Heart left ventricle (tissue), 16 donors: ENCODE measurements at regions of chr3 and their contacts with region 1.

Region 1: GRCh38 chr3:141452036-141452435 is 34.8 kb upstream of the RASA2 start:
- DNase-seq: no peak
- ATAC-seq: peak; percentile 67 to 78 (median 72)
- H3K4me3 ChIP-seq: no peak overlapping the region
- H3K27ac ChIP-seq: peak overlapping the region in 5 of 12 donors; percentile 17 to 66 (median 19)
- H3K4me1 ChIP-seq: peaks cover 0 to 60% (median 29%) of the 10 kb centered on the region in 12 donors
- H3K27me3 ChIP-seq: no peaks in the 10 kb centered on the region
- CTCF ChIP-seq: peak; percentile 55 to 89 (median 76)
- POLR2A ChIP-seq: no peak

Region 2: GRCh38 chr3:141231101-141231935 is 220.7 kb before region 1 on chr3 and contains the start of gene PXYLP1:
- intact Hi-C with region 1: loop called in 4 of 10 experiments (anchors 10 kb)
- DNase-seq: peak; percentile 94 to 98 (median 95)
- ATAC-seq: peak; percentile 94 to 97 (median 96)
- H3K4me3 ChIP-seq: peak within 1 kb of the TSS; percentile 71 to 95 (median 87)
- H3K27ac ChIP-seq: peak within 1 kb of the TSS; percentile 45 to 96 (median 90)
- H3K4me1 ChIP-seq: peaks cover 0 to 40% (median 14%) of the 10 kb centered on the region in 12 donors
- H3K27me3 ChIP-seq: no peaks in the 10 kb centered on the region
- CTCF ChIP-seq: peak; percentile 43 to 94 (median 78)
- POLR2A ChIP-seq: peak in 1 of 2 donors; percentile 81
- total RNA-seq, gene PXYLP1: 15.1 to 30.6 (median 21.2) TPM

Region 3: DNA sequence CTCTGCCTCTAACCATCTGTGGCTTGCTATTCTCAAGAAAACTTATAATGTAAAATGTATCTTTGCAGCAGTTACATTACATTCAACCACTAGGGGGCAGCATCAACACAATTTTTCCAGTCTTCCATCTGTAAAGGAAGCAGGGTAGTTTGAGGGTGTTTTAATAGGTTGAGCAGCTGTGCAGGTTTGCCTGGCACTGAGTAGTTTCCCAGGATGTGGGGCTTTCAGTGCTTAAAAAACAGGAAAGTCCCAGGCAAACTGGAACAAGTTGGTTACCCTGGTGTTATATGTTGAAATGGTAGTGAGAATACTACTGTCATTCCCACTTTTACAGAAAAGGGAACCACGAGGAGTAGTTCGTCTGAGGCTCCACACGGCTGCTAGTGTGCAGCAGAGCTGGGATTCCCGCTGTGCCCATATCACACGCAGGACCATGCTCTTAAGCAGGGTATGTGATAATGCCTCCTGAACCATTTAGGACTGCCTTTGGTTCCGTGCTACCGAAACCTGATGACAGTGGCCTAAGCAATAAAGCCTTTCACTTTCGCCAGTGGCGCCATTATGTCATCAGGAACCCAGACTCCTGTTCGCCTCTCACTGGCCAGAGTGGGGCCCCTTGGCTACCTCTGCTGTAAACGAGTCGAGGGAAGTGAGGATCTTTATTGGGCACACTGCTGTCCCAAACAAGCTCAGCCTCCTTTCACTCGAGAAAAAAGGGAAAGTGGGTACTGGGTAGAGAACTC is 148.4 kb before region 1 on chr3:
- intact Hi-C with region 1: loop called in 2 of 10 experiments (anchors 2 kb)
- DNase-seq: peak in 2 of 5 donors; percentile 48 to 58
- ATAC-seq: peak; percentile 59 to 76 (median 68)
- H3K4me3 ChIP-seq: no peak overlapping the region
- H3K27ac ChIP-seq: peak overlapping the region in 2 of 12 donors; percentile 4 to 13
- H3K4me1 ChIP-seq: peaks cover 0 to 25% (median 3%) of the 10 kb centered on the region in 12 donors
- H3K27me3 ChIP-seq: no peaks in the 10 kb centered on the region
- CTCF ChIP-seq: peak; percentile 71 to 97 (median 82)
- POLR2A ChIP-seq: no peak

Region 4: DNA sequence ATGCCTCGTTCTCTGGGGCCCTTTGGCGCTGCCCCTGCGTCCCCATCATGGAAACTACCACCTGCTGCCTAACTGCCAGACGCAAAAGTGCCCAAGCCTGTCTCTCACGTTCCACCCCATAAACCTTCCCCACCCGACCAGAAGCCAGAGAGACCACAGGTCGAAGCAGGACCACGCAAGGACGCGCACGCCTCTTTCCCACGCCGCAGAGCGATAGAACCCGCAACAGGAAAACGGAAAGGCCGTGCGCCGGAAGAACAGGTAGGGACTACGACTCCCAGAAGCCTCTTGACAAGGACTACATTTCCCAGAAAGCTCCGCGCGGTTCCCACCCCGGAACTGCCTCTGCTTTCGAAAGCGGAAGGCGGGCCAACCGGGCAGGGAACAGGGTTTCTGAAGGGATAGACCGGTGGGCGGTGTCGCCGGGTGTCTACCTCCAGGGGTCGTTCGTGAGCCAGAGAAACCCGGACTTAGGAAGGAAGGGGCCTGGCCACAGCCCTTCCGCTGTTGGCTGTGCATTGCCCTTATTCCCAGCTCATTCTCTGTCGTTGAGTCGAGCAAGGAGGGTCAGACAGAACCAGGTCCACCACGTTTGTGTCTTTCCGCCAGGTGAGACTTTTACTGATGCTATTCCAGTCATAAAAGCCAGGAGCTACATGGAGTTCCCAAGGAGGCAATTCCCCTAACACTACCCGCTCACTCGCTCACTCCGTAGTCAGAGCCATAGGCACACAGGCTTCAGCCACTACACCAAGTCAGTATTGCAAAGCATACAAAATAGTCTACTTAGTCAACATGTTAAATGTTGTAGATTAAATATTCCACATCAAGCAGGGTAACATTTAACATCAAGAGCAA is 140.3 kb before region 1 on chr3:
- intact Hi-C with region 1: loop called in 9 of 10 experiments (anchors 2 to 5 kb)
- DNase-seq: peak; percentile 98 to 99 (median 99)
- ATAC-seq: peak; percentile 97 to 99 (median 98)
- H3K4me3 ChIP-seq: peak overlapping the region; percentile 28 to 85 (median 70)
- H3K27ac ChIP-seq: peak overlapping the region; percentile 1 to 90 (median 80)
- H3K4me1 ChIP-seq: peaks cover 0 to 29% (median 11%) of the 10 kb centered on the region in 12 donors
- H3K27me3 ChIP-seq: no peaks in the 10 kb centered on the region
- CTCF ChIP-seq: peak; percentile 69 to 92 (median 84)
- POLR2A ChIP-seq: peak in 1 of 2 donors; percentile 74

Region 5: DNA sequence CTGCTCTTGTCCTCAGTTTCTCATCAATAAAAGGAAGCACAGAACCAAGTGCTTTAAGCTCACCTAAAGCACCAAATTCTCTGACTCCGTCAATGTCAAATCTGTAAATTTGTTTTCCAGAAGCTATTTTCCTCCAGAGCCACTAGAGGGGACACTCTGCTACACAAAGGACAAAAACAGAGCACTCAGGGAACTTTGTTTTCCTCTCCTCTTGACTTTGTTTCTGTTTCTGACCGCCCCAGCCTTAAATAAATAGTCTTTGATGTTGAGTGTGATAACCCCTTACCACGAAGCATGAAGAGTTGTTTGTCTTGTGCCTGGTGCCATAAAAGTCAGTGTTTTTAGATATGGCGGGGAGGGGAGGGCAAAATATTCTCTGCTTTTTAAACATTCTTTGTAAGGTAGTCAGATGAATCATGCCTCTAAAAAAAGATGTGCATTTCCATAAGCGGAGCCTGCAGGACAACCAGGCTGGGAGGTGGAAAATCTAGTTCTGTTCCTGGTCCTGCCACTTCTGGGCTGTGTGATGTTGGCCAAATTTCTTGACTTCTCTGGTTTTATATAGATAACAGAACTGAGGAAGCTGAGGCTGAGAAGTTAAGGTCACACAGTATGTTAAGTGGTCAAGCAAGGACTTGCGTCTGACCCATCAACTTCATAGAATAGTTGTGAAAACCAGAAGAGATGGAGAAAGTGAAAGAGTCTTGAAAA is 91.0 kb before region 1 on chr3:
- intact Hi-C with region 1: loop called in 9 of 10 experiments (anchors 1 to 2 kb)
- DNase-seq: peak in 1 of 5 donors; percentile 23
- ATAC-seq: peak; percentile 72 to 88 (median 82)
- H3K4me3 ChIP-seq: peak overlapping the region in 6 of 12 donors; percentile 6 to 33 (median 26)
- H3K27ac ChIP-seq: peak overlapping the region in 10 of 12 donors; percentile 10 to 60 (median 44)
- H3K4me1 ChIP-seq: peaks cover 0 to 12% (median 4%) of the 10 kb centered on the region in 12 donors
- H3K27me3 ChIP-seq: no peaks in the 10 kb centered on the region
- CTCF ChIP-seq: peak; percentile 63 to 92 (median 84)
- POLR2A ChIP-seq: no peak

Region 6: DNA sequence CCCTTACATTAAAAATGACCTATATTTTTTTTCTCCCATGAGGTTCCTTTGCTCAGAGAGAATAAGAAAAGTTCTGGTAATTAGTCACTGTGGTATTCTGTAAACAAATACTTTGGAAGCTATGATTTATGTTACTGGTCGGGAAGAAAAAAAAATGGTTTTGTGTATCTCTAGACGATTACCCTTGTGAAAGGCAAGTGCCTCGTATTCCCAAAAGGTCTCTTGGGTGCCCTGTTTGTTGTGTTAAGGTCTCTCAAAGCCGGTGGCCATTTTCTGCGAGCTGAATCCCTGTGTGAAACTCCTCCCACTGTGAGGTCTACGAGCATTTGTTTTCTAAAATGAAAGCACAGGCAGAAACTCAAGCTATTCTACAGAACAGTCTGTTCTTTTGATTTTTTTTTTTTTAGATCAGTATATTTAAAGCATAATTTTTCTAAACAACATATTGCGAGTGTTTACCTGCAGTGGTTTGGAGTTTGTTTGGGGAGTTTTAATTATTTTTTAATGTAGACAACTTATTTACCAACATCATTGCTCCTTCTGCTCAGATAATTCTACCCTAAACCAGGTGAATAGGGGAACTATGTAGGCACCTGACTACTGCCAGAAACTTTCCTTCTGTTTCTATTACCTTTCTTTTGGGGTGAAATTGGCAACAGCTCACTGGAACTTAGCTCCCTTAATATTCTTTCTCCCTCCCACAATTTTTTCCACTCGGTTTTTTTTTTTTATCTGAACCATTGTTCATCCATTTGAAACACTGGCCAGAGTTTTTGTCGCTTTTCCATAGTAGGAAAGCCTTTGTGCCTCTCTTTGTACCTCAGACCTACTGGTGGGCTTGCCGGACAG is 39.7 kb before region 1 on chr3:
- intact Hi-C with region 1: loop called in 1 of 10 experiments (anchors 5 kb)
- DNase-seq: peak in 4 of 5 donors; percentile 62 to 68 (median 67)
- ATAC-seq: peak; percentile 32 to 70 (median 64)
- H3K4me3 ChIP-seq: peak overlapping the region in 10 of 12 donors; percentile 12 to 53 (median 34)
- H3K27ac ChIP-seq: peak overlapping the region; percentile 93 to 99 (median 98)
- H3K4me1 ChIP-seq: peaks cover 13 to 99% (median 90%) of the 10 kb centered on the region in 12 donors
- H3K27me3 ChIP-seq: no peaks in the 10 kb centered on the region
- CTCF ChIP-seq: no peak
- POLR2A ChIP-seq: no peak